Left cardiac atrium (tissue), 4 donors: ENCODE measurements at regions of chr3 and their contacts with region 1.

Region 1: DNA sequence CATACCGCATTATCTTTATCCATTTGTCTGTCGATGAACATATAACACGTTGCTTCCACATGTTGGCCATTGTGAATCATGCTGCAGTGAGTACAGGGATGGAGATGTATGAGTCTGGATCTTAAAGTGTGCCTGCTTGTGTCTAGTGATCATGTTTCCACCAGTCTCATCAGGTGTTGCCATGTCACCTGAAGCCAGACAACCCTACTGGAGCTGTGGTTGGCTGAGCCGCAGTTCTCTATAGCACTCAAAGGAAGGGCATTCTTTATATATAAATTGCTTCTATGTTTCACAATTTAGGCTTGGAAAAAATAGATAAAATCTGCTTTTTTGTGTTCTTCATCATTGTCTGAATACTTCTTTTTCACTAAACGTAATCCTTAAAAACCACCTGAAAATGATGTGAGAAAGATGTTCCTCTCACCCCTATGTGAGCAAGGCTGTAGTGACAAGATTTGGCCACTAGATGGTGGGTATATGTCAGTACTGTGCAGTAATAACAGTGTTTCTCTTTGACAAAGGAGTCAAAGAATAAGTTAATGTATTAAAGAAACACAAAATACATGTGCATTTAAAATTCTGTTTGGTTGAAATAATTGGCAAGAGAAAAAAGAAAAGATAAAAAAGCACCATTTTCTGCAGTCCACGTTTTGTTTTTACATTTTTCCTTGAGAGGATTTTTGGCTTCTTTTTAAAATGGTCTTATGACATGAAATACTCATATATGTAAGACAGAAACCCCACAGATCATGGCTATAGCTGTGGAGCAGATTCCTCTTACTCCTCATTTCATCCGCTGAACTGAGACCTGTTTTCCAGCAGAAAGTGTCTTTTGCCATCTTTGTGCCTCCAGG is 394.5 kb upstream of the DPPA4 start:
- DNase-seq: peak; percentile 25
- ATAC-seq: peak; percentile 66 to 67

Region 2: GRCh38 chr3:110184536-110184935 is 452.7 kb after region 1 on chr3:
- intact Hi-C with region 1: no loop called
- DNase-seq: no peak
- ATAC-seq: no peak

Region 3: DNA sequence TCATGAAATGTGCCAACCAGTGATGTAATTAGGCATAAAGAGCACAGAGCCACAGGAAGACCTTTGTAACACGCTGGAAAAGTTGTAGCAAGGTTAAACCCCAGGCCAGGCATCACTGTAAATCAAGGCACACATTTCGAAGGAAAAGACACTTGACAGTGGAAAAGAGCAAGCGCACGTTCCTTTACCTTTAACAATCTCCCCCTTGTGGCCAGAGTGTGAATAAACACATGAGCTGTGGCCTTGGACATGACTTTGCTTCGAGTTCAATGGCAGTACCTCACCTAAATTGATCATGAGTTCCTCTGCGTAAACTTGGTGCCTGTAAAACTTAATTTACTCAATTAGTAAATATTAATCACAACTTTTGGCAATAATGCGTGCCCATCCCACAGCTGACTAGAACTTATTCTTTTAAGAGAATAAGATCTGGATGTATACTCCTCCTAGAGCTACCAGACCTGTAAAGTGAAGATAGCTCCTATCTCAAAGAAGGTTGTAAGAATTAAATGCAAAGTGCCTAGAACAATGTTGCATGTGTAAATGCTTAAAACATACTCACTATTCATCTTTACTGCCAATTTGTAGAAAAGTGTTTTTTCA is 582.8 kb after region 1 on chr3:
- intact Hi-C with region 1: loop called in 1 of 2 experiments (anchors 2 kb)
- DNase-seq: peak; percentile 48
- ATAC-seq: peak in 1 of 2 donors; percentile 31

Region 4: GRCh38 chr3:110731148-110731547 is 999.3 kb after region 1 on chr3:
- intact Hi-C with region 1: no loop called
- DNase-seq: no peak
- ATAC-seq: no peak

Region 5: GRCh38 chr3:111080413-111080812 is 1348.6 kb after region 1 on chr3:
- intact Hi-C with region 1: loop called in 1 of 2 experiments (anchors 5 kb)
- DNase-seq: no peak
- ATAC-seq: peak; percentile 27 to 41